Heart right ventricle (tissue), 16 donors: ENCODE measurements at regions of chr16 and their contacts with region 1.

Region 1: DNA sequence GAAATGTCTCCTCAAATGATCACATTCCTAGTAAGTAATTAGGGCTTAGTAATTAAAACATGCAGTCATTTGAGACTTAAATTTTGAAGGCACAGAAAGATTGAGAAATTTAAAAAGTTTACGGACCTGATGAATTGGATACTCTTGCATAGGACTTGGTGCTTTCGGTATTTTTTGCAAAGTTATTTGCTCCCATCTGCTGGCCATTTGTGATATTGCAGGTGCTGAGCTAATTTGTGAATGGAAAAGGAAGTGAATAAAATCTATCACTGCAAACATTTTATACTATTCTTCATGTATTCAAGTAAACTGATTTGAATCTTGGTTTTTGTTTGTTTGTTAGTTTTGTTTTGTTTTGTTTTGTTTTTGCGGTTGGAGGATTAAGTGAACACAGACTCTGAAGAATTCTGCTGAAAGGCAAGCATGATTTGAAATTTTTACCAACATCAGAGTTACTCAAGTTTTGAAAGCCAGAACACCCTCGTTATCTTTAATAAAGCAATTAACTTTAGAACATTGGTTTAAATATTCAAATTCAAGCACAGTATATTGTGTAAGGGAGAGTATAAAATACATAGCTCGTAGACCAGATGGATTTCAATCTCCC is 689.5 kb upstream of the RBFOX1 start:
- DNase-seq: peak in 1 of 2 donors; percentile 27
- ATAC-seq: no peak
- H3K4me3 ChIP-seq: no peak overlapping the region
- H3K27ac ChIP-seq: no peak overlapping the region
- H3K4me1 ChIP-seq: peaks cover 0 to 4% (median 0%) of the 10 kb centered on the region in 9 donors
- H3K27me3 ChIP-seq: peaks cover 0 to 53% (median 28%) of the 10 kb centered on the region in 7 donors
- CTCF ChIP-seq: peak; percentile 55 to 84 (median 80)

Region 2: DNA sequence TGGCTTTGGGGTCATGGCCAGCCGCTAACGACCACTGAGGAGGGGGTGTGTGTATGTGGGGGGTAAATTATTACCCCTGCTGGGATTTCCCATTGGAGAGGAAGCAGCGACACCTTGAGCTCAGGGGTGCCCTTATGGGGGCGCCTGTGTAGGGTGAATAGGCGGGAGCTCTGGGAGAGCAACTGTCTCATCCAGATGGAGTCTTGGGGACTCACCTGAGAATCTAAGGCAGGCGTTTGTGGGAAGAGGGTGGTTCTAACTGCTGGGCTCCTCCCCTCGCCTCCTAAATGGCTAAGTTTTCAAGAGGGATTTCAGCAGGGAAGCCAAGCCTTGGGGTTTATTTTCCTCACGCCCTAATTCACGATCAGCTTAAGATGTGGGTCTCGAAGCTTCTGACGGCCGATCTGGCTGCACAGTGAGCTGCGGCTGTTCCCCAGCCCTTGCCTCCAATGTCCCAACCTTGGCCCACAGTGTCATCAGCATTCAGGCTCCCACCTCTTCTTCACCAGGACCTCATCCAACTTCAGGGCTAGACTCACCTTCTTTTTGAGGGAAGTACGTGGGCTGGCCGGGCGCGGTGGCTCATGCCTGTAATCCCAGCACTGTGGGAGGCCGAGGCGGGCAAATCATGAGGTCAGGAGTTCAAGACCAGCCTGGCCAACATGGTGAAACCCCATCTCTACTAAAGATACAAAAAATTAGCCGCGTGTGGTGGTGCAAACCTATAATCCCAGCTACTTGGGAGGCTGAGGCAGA is 1408.7 kb before region 1 on chr16:
- intact Hi-C with region 1: loop called in 5 of 10 experiments (anchors 5 to 10 kb)
- DNase-seq: no peak
- ATAC-seq: no peak
- H3K4me3 ChIP-seq: no peak overlapping the region
- H3K27ac ChIP-seq: no peak overlapping the region
- H3K4me1 ChIP-seq: no peaks in the 10 kb centered on the region
- H3K27me3 ChIP-seq: peaks cover 0 to 38% (median 20%) of the 10 kb centered on the region in 7 donors
- CTCF ChIP-seq: no peak

Region 3: DNA sequence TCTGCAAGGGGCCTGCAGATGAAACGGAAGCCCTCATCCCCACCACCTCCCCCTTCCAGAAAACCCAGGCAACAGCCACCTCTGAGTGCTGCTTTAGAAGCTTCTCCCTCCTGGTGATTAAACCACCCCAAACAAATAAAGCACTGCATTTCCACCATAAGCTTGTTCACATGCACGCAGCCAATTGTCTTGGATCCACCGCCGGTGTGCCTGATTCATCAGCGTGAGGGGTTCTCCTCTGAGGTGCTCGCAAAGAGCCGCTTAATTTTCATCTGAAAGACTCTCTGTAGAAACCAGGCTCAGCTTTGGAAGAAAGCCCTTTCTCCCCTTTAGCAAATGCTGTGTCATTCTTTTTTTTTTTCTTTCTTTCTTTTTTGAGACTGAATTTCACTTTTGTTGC is 1390.4 kb before region 1 on chr16:
- intact Hi-C with region 1: loop called in 1 of 10 experiments (anchors 10 kb)
- DNase-seq: no peak
- ATAC-seq: no peak
- H3K4me3 ChIP-seq: no peak overlapping the region
- H3K27ac ChIP-seq: no peak overlapping the region
- H3K4me1 ChIP-seq: no peaks in the 10 kb centered on the region
- H3K27me3 ChIP-seq: peaks cover 0 to 7% (median 0%) of the 10 kb centered on the region in 7 donors
- CTCF ChIP-seq: no peak

Region 4: DNA sequence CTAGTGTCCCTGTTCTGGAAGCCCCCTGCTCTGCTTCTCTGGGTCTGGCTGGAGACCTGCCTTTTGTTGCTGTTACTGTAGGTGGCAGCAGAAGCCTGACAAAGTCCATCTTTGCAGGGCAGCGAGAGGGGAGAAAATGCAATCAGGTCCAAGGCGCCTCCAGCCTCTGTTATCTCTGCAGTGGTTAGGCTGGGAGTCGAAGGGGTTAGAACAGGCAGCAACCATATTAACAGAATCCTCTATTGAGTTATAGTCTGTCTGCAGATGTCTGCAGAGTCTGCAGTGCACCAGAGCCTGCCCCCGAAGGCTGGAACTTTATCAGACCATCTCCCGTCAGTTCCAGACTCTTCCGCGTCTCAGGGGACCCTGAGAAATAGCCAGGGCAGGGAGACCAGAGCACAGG is 1140.7 kb before region 1 on chr16:
- intact Hi-C with region 1: loop called in 3 of 10 experiments (anchors 5 to 10 kb)
- DNase-seq: no peak
- ATAC-seq: no peak
- H3K4me3 ChIP-seq: no peak overlapping the region
- H3K27ac ChIP-seq: no peak overlapping the region
- H3K4me1 ChIP-seq: no peaks in the 10 kb centered on the region
- H3K27me3 ChIP-seq: peaks cover 0 to 18% (median 0%) of the 10 kb centered on the region in 7 donors
- CTCF ChIP-seq: peak in 6 of 9 donors; percentile 20 to 45 (median 29)

Region 5: DNA sequence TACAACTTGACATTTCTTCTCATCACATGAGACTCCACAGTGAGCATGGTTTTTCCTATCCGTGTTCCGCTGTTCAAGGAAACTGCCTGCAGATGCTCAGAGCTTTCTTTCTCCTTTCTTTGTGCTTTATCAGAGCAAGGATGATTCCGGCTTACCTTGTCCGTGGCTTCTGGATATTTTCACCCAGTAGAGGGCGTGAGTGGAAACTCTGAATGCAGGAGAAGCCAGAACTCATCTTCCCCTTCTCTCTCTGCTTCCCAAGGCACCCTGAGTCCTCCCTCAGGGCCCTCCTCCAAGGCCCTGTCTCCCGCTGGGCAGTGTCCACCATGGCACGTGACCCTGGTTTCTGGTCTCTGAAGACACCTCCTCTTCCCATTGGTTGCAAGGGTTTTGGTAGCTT is 31.6 kb before region 1 on chr16:
- intact Hi-C with region 1: loop called in 1 of 10 experiments (anchors 2 kb)
- DNase-seq: no peak
- ATAC-seq: no peak
- H3K4me3 ChIP-seq: no peak overlapping the region
- H3K27ac ChIP-seq: no peak overlapping the region
- H3K4me1 ChIP-seq: no peaks in the 10 kb centered on the region
- H3K27me3 ChIP-seq: peaks cover 0 to 6% (median 0%) of the 10 kb centered on the region in 7 donors
- CTCF ChIP-seq: no peak

Region 6: DNA sequence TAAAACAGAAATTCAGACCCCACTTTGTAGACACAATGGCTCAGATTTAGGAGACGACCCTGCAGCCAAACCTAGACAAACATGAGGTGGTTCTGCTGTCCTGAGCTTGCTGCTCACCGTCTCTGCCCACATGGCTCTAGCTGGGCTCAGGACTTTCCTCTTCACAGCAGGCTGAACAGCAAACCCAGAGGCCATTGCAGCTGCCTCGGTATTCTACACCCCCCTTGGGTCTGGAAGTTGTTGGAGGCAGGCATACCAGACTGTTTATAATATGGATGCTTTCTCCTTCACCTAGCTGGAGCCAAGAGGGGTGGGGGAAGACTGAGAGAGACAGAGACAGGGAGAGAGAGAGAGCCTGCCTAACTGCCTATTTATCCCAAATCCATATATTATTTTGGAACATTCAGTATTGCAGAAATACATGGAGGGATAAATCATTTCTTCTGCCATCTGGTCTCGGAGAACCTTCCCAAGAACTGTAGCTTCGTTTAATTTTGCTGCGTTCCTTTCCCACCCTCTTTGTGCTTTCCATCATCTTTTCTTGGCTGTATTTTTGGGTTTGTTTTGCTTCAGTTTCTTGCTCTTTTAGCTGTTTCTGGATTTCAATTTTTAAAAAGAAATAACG is 61.2 kb after region 1 on chr16:
- intact Hi-C with region 1: no loop called
- DNase-seq: no peak
- ATAC-seq: no peak
- H3K4me3 ChIP-seq: no peak overlapping the region
- H3K27ac ChIP-seq: no peak overlapping the region
- H3K4me1 ChIP-seq: no peaks in the 10 kb centered on the region
- H3K27me3 ChIP-seq: no peaks in the 10 kb centered on the region
- CTCF ChIP-seq: no peak